ENCODE measurements at regions of chr5 and their contacts with region 1.

Region 1: DNA sequence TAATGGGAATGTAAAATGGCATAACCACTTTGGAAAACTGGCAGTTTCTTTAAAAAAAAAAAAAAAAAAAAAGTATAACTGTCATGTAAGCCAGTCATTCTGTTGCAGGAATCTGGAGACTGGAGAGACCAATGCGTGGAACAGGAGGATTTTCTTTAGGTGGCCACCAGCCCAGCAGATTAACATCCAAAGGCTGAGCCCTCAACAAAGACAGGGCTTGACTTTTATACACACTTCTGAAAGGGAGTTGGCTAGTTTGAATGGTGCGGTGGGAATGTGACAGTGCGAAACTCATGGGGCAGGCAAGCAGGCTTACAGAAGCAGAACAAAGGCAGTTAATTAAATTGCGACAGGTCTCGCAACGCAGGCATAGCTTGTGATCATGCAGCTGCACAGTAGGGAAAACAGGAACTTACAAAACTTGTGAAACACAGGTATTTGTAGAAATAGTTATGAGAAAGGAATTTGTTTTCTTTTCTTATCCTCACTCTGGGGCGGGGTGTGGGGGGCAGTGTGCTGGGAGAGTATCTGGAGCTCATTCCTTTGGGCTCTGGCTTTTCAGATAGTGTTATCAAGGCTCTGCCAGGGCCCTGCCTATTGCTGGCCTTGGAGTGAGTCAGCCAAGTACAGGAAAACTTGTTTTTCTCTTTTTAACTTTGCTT is 12.0 kb downstream of the UIMC1 start:
- DNase-seq: no peak
- H3K4me3 Mint-ChIP-seq: no peak overlapping the region
- H3K27ac Mint-ChIP-seq: peak overlapping the region; percentile 83
- H3K4me1 Mint-ChIP-seq: peaks cover 45% of the 10 kb centered on the region
- H3K27me3 Mint-ChIP-seq: no peaks in the 10 kb centered on the region

Region 2: DNA sequence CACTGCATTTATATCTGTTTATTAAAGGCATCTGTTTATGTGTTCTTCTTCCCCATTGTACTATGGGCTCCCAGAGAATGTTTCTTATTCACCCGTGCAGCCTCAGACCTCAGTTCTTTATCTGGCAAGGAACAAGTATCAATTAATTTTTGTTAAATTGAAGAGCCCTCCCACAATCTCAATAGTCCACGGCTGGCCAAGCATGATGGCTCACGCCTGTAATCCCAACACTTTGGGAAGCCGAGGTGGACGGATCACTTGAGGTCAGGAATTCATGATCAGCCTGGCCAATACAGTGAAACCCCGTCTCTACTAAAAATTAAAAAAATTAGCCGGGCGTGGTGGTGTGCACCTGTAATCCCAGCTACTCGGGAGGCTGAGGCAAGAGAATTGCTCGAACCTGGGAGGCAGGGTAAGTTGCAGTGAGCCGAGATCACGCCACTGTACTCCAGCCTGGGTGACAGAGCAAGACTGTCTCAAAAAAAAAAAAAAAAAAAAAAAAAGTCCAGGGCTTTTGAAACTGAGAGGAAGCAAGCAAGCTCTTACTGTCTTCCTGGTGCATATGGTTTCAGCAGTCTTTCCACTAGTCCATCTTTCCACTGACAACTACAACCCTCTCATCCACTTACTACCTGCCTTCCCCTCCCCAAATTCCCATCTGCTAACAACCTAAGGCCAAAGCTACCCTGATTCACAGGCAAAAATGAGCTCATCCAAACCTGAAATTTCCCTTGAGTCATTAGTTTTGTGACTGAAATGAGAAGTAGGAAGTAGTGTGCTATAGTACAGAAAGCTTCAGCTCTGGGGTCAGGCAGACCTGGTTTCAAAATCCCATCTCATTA is 93.1 kb before region 1 on chr5:
- CTCF ChIA-PET with region 1: no interaction called
- POLR2A ChIA-PET with region 1: no interaction called
- intact Hi-C with region 1: loop called (anchors 5 kb)
- DNase-seq: peak; percentile 29
- H3K4me3 Mint-ChIP-seq: no peak overlapping the region
- H3K27ac Mint-ChIP-seq: peak overlapping the region; percentile 54
- H3K4me1 Mint-ChIP-seq: peaks cover 39% of the 10 kb centered on the region
- H3K27me3 Mint-ChIP-seq: no peaks in the 10 kb centered on the region

Region 3: GRCh38 chr5:177022384-177023308 is 28.1 kb after region 1 on chr5 and contains the start of gene ZNF346:
- CTCF ChIA-PET with region 1: no interaction called
- POLR2A ChIA-PET with region 1: interaction called, 5 read pairs
- intact Hi-C with region 1: loop called (anchors 1 kb)
- DNase-seq: peak; percentile 94
- H3K4me3 Mint-ChIP-seq: peak within 1 kb of the TSS; percentile 89
- H3K27ac Mint-ChIP-seq: peak within 1 kb of the TSS; percentile 89
- H3K4me1 Mint-ChIP-seq: peaks cover 33% of the 10 kb centered on the region
- H3K27me3 Mint-ChIP-seq: no peaks in the 10 kb centered on the region
- total RNA-seq, gene ZNF346: 12.7 to 15.6 TPM

Measured in activated CD4-positive, alpha-beta memory T cell treated with anti-CD3 and anti-CD28 coated beads for 36 hours (primary cell).